Naive thymus-derived CD8-positive, alpha-beta T cell (primary cell): ENCODE measurements at regions of chr3 and their contacts with region 1.

Region 1: GRCh38 chr3:171255236-171255806 is 204.9 kb downstream of the TNIK start:
- DNase-seq: peak in 3 of 10 donors; percentile 46 to 60 (median 54)
- ATAC-seq: peak; percentile 86
- H3K4me3 Mint-ChIP-seq: peak overlapping the region; percentile 36 to 77 (median 68)
- H3K27ac Mint-ChIP-seq: peak overlapping the region; percentile 83 to 99 (median 96)
- H3K4me1 Mint-ChIP-seq: peaks cover 37 to 92% (median 85%) of the 10 kb centered on the region in 4 donors
- H3K27me3 Mint-ChIP-seq: no peaks in the 10 kb centered on the region

Region 2: DNA sequence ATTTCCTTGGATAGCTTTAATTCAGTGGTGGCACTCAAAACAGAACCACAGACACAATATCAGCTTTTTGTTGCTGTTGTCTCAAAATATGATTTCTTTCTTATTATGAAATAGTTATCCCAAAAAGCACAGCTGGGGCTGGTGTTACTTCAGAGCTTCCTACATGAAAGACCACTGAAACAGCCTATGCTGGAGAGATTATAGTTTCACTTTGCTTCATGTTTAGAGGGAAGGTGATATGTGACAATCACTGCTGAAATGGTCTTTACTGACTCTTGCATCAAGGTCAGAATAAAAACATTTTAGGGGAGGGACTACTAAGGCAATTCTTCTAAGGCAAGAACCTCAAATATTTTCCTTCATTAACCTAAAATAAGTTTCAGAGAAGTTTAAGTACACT is 14.2 kb after region 1 on chr3:
- POLR2A ChIA-PET with region 1: interaction called, 14 read pairs
- DNase-seq: peak in 2 of 10 donors; percentile 41 to 45
- ATAC-seq: peak; percentile 77 to 83
- H3K4me3 Mint-ChIP-seq: peak overlapping the region in 9 of 10 donors; percentile 26 to 71 (median 52)
- H3K27ac Mint-ChIP-seq: peak overlapping the region; percentile 23 to 87 (median 74)
- H3K4me1 Mint-ChIP-seq: peaks cover 36 to 88% (median 78%) of the 10 kb centered on the region in 4 donors
- H3K27me3 Mint-ChIP-seq: no peaks in the 10 kb centered on the region

Region 3: GRCh38 chr3:171301998-171302397 is 46.7 kb after region 1 on chr3:
- POLR2A ChIA-PET with region 1: no interaction called
- DNase-seq: no peak
- ATAC-seq: no peak
- H3K4me3 Mint-ChIP-seq: no peak overlapping the region
- H3K27ac Mint-ChIP-seq: peak overlapping the region in 3 of 10 donors; percentile 0 to 42 (median 27)
- H3K4me1 Mint-ChIP-seq: peaks cover 23 to 70% (median 53%) of the 10 kb centered on the region in 4 donors
- H3K27me3 Mint-ChIP-seq: no peaks in the 10 kb centered on the region

Region 4: DNA sequence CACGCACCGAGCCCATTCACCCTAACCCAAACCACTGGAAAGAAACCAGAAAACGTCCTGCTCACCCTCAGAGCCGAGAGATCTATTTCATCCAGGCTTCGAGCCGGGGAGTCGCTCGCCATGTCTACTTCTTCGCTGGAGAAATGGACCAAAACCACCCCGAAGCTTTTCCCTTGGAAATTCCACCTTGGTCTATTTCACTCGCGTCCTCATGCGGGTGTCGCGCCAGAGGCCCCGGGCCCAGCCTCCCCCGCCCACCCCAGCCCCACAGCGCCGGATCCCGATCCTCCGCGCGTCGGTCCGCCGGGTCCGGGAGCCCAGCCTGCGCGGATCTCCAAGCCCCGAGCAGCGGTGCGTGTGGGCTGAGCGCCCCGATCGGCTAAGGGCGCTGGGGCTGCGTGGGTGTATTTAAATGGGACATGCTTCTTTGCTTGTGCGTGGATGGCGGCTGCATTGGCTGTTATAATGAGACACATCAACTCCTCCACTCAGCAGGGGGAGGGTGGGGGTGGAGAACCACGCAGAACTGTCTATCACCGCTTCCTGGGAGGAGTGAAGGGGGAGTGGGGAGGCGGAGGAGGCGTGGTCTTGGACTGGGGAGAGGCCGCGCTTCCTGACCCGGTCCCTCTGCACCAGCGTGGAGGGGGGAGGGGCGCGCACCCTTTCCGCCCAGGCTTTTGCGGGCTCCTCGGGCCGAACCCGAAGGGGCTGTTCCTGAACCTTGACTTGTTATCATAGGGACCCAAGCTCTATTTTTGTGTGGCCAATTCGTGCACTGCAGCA is 204.8 kb after region 1 on chr3 and contains the start of gene TNIK:
- POLR2A ChIA-PET with region 1: interaction called, 15 read pairs
- DNase-seq: peak; percentile 84 to 98 (median 93)
- ATAC-seq: peak; percentile 79 to 80
- H3K4me3 Mint-ChIP-seq: peak within 1 kb of the TSS; percentile 91 to 98 (median 93)
- H3K27ac Mint-ChIP-seq: peak within 1 kb of the TSS; percentile 88 to 98 (median 95)
- H3K4me1 Mint-ChIP-seq: peaks cover 26 to 55% (median 47%) of the 10 kb centered on the region in 4 donors
- H3K27me3 Mint-ChIP-seq: no peaks in the 10 kb centered on the region
- polyA plus RNA-seq, gene TNIK: 13.2 to 16.1 (median 13.8) TPM